T-cell (primary cell): ENCODE measurements at regions of chr2 and their contacts with region 1.

Region 1: GRCh38 chr2:159118115-159118858 is 149.8 kb downstream of the TANC1 start:
- DNase-seq: peak; percentile 39 to 87 (median 71)
- ATAC-seq: peak; percentile 73 to 91 (median 83)
- H3K4me3 ChIP-seq: no peak overlapping the region
- H3K4me3 Mint-ChIP-seq: no peak overlapping the region
- H3K27ac ChIP-seq: no peak overlapping the region
- H3K27ac Mint-ChIP-seq: no peak overlapping the region
- H3K4me1 ChIP-seq: peaks cover 0 to 4% of the 10 kb centered on the region in 2 experiments
- H3K4me1 Mint-ChIP-seq: peaks cover 4 to 8% (median 7%) of the 10 kb centered on the region in 3 donors
- H3K27me3 ChIP-seq: no peaks in the 10 kb centered on the region
- H3K27me3 Mint-ChIP-seq: no peaks in the 10 kb centered on the region

Region 2: GRCh38 chr2:158903711-158904443 is 214.4 kb before region 1 on chr2:
- CTCF ChIA-PET with region 1: interaction called, 17 to 18 read pairs
- POLR2A ChIA-PET with region 1: no interaction called
- DNase-seq: no peak
- ATAC-seq: no peak
- H3K4me3 ChIP-seq: no peak overlapping the region
- H3K4me3 Mint-ChIP-seq: no peak overlapping the region
- H3K27ac ChIP-seq: no peak overlapping the region
- H3K27ac Mint-ChIP-seq: no peak overlapping the region
- H3K4me1 ChIP-seq: no peaks in the 10 kb centered on the region
- H3K4me1 Mint-ChIP-seq: no peaks in the 10 kb centered on the region
- H3K27me3 ChIP-seq: no peaks in the 10 kb centered on the region
- H3K27me3 Mint-ChIP-seq: no peaks in the 10 kb centered on the region

Region 3: GRCh38 chr2:158969715-158970245 is 148.5 kb before region 1 on chr2:
- CTCF ChIA-PET with region 1: interaction called in 1 of 2 experiments, 11 read pairs
- POLR2A ChIA-PET with region 1: no interaction called
- DNase-seq: no peak
- ATAC-seq: no peak
- H3K4me3 ChIP-seq: peak overlapping the region; percentile 48 to 91
- H3K4me3 Mint-ChIP-seq: peak overlapping the region; percentile 56 to 87 (median 73)
- H3K27ac ChIP-seq: no peak overlapping the region
- H3K27ac Mint-ChIP-seq: no peak overlapping the region
- H3K4me1 ChIP-seq: peaks cover 7 to 23% of the 10 kb centered on the region in 2 experiments
- H3K4me1 Mint-ChIP-seq: peaks cover 15 to 21% (median 17%) of the 10 kb centered on the region in 3 donors
- H3K27me3 ChIP-seq: peaks cover 0 to 32% of the 10 kb centered on the region in 2 experiments
- H3K27me3 Mint-ChIP-seq: peaks cover 27 to 60% of the 10 kb centered on the region in 2 donors

Region 4: DNA sequence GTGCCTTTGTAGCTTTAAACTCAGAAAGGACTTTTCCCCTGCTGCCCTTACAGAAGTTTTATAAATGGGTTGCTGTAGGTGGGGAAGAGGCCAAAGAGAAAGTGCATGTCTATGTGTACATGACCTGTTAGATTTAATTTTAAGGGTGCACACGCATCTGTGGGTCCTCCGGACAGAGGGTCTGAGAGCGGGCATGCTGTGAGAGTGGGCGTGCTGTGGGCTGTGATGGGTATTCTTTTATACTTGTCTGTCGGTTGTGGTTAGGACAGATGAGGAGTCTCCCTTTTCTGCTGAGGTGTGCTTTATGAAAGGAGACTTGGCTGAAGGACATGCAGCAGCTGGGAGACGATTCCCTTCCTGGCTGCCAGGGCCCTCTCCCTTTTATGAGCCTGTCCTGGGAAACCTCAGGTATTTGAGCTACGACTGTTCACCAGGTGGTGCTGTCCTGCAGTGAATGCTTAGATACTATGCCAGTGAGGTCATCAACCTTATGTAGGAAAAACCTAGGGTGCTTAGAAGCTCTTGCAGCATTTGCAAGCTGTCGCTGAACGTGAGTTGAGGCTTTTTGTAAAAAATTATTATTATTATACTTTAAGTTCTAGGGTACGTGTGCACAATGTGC is 82.4 kb before region 1 on chr2:
- CTCF ChIA-PET with region 1: interaction called, 14 to 65 read pairs
- POLR2A ChIA-PET with region 1: no interaction called
- DNase-seq: peak in 20 of 35 experiments; percentile 0 to 53 (median 17)
- ATAC-seq: peak in 2 of 4 experiments; percentile 58 to 73
- H3K4me3 ChIP-seq: no peak overlapping the region
- H3K4me3 Mint-ChIP-seq: no peak overlapping the region
- H3K27ac ChIP-seq: no peak overlapping the region
- H3K27ac Mint-ChIP-seq: no peak overlapping the region
- H3K4me1 ChIP-seq: no peaks in the 10 kb centered on the region
- H3K4me1 Mint-ChIP-seq: no peaks in the 10 kb centered on the region
- H3K27me3 ChIP-seq: no peaks in the 10 kb centered on the region
- H3K27me3 Mint-ChIP-seq: peaks cover 4 to 9% of the 10 kb centered on the region in 2 donors

Region 5: DNA sequence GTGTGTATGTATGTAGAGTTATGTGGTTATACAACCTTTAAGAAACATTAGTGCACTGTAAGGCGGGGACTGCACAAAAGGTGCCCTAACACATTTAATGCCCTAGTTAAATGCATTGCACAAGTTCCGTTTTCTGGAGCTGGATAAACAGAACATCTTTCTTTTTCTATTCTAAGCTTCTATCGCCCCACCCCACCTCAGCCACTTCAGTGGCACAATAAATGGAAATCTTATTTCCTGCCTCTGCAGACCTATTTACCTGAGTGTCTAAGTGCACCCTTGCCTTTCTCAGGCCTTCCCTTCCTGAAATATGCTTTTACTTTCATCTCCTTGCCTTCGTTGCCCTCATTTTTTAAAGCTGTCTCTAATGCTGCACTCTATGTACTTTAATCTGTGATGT is 26.3 kb before region 1 on chr2:
- CTCF ChIA-PET with region 1: interaction called, 4 to 10 read pairs
- POLR2A ChIA-PET with region 1: no interaction called
- DNase-seq: peak in 22 of 35 experiments; percentile 1 to 45 (median 16)
- ATAC-seq: peak; percentile 73 to 92 (median 87)
- H3K4me3 ChIP-seq: no peak overlapping the region
- H3K4me3 Mint-ChIP-seq: peak overlapping the region in 2 of 3 donors; percentile 9 to 56
- H3K27ac ChIP-seq: peak overlapping the region; percentile 63
- H3K27ac Mint-ChIP-seq: peak overlapping the region; percentile 75 to 82
- H3K4me1 ChIP-seq: peaks cover 34 to 42% of the 10 kb centered on the region in 2 experiments
- H3K4me1 Mint-ChIP-seq: peaks cover 50 to 64% (median 60%) of the 10 kb centered on the region in 3 donors
- H3K27me3 ChIP-seq: no peaks in the 10 kb centered on the region
- H3K27me3 Mint-ChIP-seq: no peaks in the 10 kb centered on the region